Activated CD4-positive, alpha-beta memory T cell treated with anti-CD3 and anti-CD28 coated beads for 36 hours (primary cell): ENCODE measurements at regions of chr12 and their contacts with region 1.

Region 1: GRCh38 chr12:131311764-131312163 is 358.1 kb downstream of the ADGRD1 start:
- DNase-seq: peak; percentile 21
- H3K4me3 Mint-ChIP-seq: peak overlapping the region; percentile 3
- H3K27ac Mint-ChIP-seq: no peak overlapping the region
- H3K4me1 Mint-ChIP-seq: peaks cover 8% of the 10 kb centered on the region
- H3K27me3 Mint-ChIP-seq: peaks cover 20% of the 10 kb centered on the region

Region 2: GRCh38 chr12:131642101-131642540 is 330.4 kb after region 1 on chr12:
- CTCF ChIA-PET with region 1: no interaction called
- POLR2A ChIA-PET with region 1: no interaction called
- intact Hi-C with region 1: loop called (anchors 5 kb)
- DNase-seq: peak; percentile 35
- H3K4me3 Mint-ChIP-seq: no peak overlapping the region
- H3K27ac Mint-ChIP-seq: no peak overlapping the region
- H3K4me1 Mint-ChIP-seq: peaks cover 3% of the 10 kb centered on the region
- H3K27me3 Mint-ChIP-seq: peaks cover 9% of the 10 kb centered on the region